Left ventricle myocardium superior (tissue), 1 donor: ENCODE measurements at regions of chr5 and their contacts with region 1.

Region 1: DNA sequence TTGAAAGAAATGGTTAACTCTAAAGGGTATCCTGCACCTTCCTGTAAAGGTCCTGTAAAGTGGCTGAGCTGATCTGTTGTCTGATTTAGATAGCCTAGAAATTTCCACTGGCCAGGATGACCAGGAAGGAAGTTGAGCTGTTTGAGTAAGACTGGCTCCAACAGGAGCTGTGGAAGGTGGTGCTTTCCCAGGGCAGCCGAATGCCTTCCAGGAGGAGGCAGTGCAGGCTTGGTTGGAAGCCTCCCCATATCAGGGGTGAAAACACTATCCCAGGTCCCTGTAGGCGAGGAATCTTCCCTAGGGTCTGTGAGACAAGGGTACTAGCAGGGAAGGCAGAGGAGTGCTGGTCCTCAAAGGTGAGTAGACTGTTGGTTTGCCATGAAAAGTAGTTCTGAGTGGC is 98.4 kb downstream of the LIX1 start:
- DNase-seq: peak; percentile 40
- ATAC-seq: peak; percentile 79

Region 2: DNA sequence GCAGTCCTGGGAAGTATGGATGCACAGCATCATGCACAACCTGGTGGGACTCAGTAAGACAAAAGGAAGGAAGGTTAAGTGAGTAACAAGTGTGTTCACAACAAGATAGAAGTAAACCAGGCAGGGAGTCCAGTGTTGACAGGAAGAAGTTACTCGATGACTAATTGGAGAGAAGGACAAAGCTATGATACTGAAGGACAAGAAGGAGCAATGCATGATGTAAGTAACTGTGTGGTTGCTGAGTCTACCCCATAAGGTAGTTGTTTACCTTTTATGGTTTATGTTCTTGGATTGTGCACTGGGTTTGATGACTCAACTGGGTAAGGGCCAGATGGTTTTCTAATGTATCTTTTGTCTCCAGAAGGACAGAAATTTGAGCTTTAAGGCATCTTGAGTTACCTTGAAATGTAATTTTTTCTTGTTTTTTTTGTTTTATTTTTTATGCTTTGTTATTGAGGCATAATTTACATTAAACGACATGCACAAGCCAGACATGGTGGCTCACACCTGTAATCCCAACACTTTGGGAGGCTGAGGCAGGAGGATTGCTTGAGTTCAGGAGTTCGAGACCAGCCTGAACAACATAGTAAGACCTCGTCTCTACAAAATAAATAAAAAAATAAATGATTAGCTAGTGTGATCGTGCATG is 471.1 kb before region 1 on chr5:
- intact Hi-C with region 1: no loop called
- DNase-seq: no peak
- ATAC-seq: no peak

Region 3: GRCh38 chr5:97142521-97143254 is 98.6 kb after region 1 on chr5 and contains the start of gene LIX1:
- intact Hi-C with region 1: loop called (anchors 10 kb)
- DNase-seq: no peak
- ATAC-seq: peak; percentile 75
- total RNA-seq, gene LIX1: not detected